ENCODE measurements at regions of chr1 and their contacts with region 1.

Region 1: DNA sequence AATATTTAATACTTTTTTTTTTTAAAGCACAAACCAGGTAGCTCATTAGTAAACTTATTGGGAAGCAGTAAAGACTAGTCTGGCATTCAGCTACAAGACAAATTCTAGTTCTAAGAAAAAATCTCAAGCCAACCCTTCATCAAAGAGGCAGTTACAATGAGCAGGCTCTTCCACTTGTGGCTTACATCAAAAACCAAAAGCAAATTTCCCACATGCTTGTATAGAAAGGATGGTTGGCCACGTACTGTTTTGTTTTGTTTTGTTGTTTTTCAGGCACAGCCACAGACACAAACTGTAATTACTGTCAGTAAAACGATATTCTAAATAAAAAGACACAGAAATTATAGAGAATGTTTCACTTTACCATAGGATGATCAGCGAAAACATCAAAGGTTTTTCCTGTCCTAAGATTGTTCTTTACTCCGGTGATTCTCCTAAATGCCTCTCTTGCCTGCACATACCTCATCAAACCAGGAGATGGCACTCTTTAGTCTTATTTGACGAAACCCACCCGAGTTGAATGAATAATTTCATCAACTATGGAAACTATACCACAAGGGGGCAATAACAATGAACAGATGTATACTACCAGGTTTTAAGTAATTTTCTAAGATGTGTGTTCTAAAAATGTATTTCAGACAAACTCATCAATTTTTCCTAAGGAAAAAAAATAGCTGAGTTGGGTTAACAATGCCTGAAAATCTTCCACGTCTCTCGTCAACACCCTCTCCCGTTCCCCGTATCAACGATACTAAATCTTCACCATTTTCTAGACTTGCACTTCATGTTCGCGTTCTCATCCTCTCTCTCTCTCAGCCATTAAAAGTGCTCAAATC is 26.9 kb downstream of the RPL5 start:
- DNase-seq: peak; percentile 62
- H3K4me3 ChIP-seq: no peak overlapping the region
- H3K27ac ChIP-seq: no peak overlapping the region
- H3K27me3 ChIP-seq: no peaks in the 10 kb centered on the region
- CTCF ChIP-seq: peak; percentile 92

Region 2: GRCh38 chr1:92837062-92837461 is 21.7 kb before region 1 on chr1:
- CTCF ChIA-PET with region 1: interaction called, 12 read pairs
- POLR2A ChIA-PET with region 1: no interaction called
- DNase-seq: no peak
- H3K4me3 ChIP-seq: no peak overlapping the region
- H3K27ac ChIP-seq: no peak overlapping the region
- H3K27me3 ChIP-seq: no peaks in the 10 kb centered on the region
- CTCF ChIP-seq: no peak

Region 3: GRCh38 chr1:92882819-92883218 is 24.0 kb after region 1 on chr1:
- CTCF ChIA-PET with region 1: interaction called, 37 read pairs
- POLR2A ChIA-PET with region 1: no interaction called
- DNase-seq: no peak
- H3K4me3 ChIP-seq: no peak overlapping the region
- H3K27ac ChIP-seq: no peak overlapping the region
- H3K27me3 ChIP-seq: no peaks in the 10 kb centered on the region
- CTCF ChIP-seq: no peak

Region 4: GRCh38 chr1:92960395-92961130 is 101.8 kb after region 1 on chr1:
- CTCF ChIA-PET with region 1: interaction called, 72 read pairs
- POLR2A ChIA-PET with region 1: interaction called, 3 read pairs
- DNase-seq: peak; percentile 42
- H3K4me3 ChIP-seq: peak overlapping the region; percentile 80
- H3K27ac ChIP-seq: peak overlapping the region; percentile 61
- H3K27me3 ChIP-seq: peaks cover 3% of the 10 kb centered on the region
- CTCF ChIP-seq: peak; percentile 66

Region 5: DNA sequence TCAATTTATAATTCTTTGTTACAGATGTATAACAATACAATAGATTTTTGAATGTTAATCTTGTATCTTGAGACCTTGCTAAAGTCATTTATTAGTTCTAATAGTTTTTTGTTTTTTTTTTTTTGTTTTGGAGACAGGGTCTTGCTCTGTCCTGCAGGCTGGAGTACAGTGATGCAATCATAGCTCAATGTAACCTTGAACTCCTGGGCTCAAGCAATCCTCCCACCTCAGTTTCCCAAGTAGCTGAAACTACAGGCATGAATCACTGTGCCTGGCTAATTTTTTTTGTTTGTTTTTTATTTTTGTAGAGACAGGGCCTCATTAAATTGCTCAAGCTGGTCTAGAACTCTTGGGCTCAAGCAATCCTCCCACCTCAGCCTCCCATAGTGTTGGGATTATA is 128.7 kb after region 1 on chr1:
- CTCF ChIA-PET with region 1: interaction called, 458 read pairs
- POLR2A ChIA-PET with region 1: no interaction called
- DNase-seq: no peak
- H3K4me3 ChIP-seq: no peak overlapping the region
- H3K27ac ChIP-seq: no peak overlapping the region
- H3K27me3 ChIP-seq: peaks cover 3% of the 10 kb centered on the region
- CTCF ChIP-seq: no peak

Region 6: DNA sequence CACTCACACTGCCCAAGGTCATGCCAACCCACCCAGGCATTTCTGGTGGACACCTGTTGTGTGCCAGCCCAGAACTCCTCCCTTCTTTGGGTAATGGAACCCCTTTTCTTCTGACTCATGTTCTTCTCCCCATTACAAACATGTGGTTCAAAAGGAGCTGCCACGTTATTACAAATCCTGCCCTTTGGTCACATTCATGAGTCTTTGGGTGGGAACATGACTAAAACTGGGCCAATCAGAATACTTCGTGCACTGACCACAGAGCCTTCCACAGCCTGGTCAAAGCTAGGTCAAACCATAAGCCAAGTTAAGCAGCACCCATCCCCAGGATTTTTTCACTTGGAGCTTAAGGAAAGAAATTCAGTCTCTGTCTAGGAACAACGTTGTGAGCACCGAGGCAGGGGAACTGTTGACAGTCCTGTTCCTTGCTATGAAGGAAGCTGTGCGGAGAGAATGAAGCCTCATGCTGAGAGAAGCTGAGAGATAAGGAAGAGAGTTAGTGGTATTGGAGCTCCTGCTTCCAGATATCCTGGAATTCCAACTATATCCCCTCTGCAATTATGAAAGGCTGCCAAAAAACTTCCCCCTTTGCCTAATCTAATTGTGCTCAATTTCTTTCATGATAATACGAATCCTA is 149.3 kb after region 1 on chr1:
- CTCF ChIA-PET with region 1: interaction called, 43 read pairs
- POLR2A ChIA-PET with region 1: no interaction called
- DNase-seq: no peak
- H3K4me3 ChIP-seq: no peak overlapping the region
- H3K27ac ChIP-seq: no peak overlapping the region
- H3K27me3 ChIP-seq: peaks cover 6% of the 10 kb centered on the region
- CTCF ChIP-seq: no peak

Region 7: DNA sequence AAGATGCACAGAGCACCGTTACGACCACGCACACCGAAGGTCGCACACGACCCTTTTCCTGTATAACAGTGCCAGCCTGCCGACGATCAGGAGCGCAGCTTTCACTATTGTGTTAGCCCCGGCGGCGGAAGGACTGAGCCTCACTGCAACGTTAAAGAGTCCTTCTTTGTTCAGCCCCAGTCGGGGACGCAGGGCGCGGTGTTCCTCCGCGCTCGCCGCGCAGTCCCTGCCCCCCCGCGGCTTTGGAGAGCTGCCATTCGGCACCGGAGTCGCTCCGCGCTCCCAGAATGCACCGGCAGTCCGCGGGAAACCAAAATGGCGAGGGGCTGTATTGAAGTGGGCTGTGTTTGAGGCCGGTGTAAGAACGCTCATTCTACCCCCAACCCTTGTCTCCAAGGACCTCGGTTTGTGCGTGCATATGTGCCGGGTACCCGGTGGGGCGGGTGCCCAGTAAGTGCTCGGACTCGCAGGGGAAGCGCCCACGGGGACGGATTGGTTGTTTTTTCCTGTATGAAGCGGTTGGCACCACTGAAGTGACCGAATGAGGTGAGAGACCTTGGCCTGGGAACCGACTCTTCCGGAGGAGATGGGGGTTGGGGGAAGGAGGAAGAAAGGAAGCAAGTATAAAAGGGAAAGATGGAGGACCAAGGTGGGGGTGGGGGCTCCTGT is 220.3 kb after region 1 on chr1 and contains the start of gene MTF2:
- CTCF ChIA-PET with region 1: interaction called, 10 read pairs
- POLR2A ChIA-PET with region 1: no interaction called
- DNase-seq: peak; percentile 97
- H3K4me3 ChIP-seq: peak within 1 kb of the TSS; percentile 93
- H3K27ac ChIP-seq: peak within 1 kb of the TSS; percentile 89
- H3K27me3 ChIP-seq: no peaks in the 10 kb centered on the region
- CTCF ChIP-seq: no peak
- polyA plus RNA-seq, gene MTF2: 15.8 and 23.9 TPM in 2 replicates